A673 (cell line): ENCODE measurements at regions of chr1 and their contacts with region 1.

Region 1: GRCh38 chr1:113850080-113850803 is 21.3 kb downstream of the PTPN22 start:
- DNase-seq: peak; percentile 84
- H3K4me3 ChIP-seq: no peak overlapping the region
- H3K27ac ChIP-seq: peak overlapping the region; percentile 96
- H3K4me1 ChIP-seq: peaks cover 20% of the 10 kb centered on the region
- H3K27me3 ChIP-seq: no peaks in the 10 kb centered on the region
- CTCF ChIP-seq: no peak

Region 2: GRCh38 chr1:114196618-114197502 is 346.6 kb after region 1 on chr1:
- CTCF ChIA-PET with region 1: interaction called, 4 read pairs
- POLR2A ChIA-PET with region 1: no interaction called
- intact Hi-C with region 1: loop called (anchors 1 kb)
- DNase-seq: peak; percentile 96
- H3K4me3 ChIP-seq: no peak overlapping the region
- H3K27ac ChIP-seq: peak overlapping the region; percentile 99
- H3K4me1 ChIP-seq: peaks cover 63% of the 10 kb centered on the region
- H3K27me3 ChIP-seq: no peaks in the 10 kb centered on the region
- CTCF ChIP-seq: no peak

Region 3: GRCh38 chr1:115089420-115090185 is 1239.4 kb after region 1 on chr1 and contains the start of gene TSPAN2:
- CTCF ChIA-PET with region 1: no interaction called
- POLR2A ChIA-PET with region 1: no interaction called
- intact Hi-C with region 1: no loop called
- DNase-seq: peak; percentile 42
- H3K4me3 ChIP-seq: peak within 1 kb of the TSS; percentile 57
- H3K27ac ChIP-seq: no peak within 1 kb of the TSS
- H3K4me1 ChIP-seq: peaks cover 24% of the 10 kb centered on the region
- H3K27me3 ChIP-seq: no peaks in the 10 kb centered on the region
- CTCF ChIP-seq: 0 out of 2 replicates have a peak, but pooled peaks have one; percentile 7
- total RNA-seq, gene TSPAN2: 1.9 and 2.8 TPM in 2 replicates